Activated T-helper 2 cell treated with anti-CD3 and anti-CD28 coated beads, Interferon-gamma antibody, Interleukin-2, Interleukin-4, amounts not matched to agents 10 μg/mL and 5 μg/mL and 100 μg/mL, durations not matched to agents 14 hours and 24 hours and 36 hours (primary cell): ENCODE measurements at regions of chr3 and their contacts with region 1.

Region 1: DNA sequence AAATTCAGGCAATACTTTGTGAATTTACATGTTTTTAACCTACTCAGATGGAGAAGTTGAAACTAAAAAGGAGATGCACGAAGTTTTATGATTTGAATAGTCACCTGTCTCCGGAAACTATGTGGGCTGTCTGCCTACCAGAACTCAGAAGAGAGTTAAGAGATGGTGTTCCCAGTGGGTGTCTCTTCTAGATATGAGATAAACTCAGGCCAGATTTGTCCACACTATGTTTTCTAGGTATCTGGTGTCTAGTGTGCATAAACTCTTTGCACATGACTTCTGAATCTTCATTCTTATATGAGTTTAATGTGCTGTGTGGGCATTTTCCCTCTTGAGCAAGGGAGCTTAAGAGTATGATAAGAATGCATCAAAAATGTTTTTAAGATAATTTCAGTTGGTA is 222.8 kb downstream of the FOXP1 start:
- DNase-seq: no peak
- H3K4me3 Mint-ChIP-seq: peak overlapping the region; percentile 52
- H3K27ac Mint-ChIP-seq: peak overlapping the region; percentile 96
- H3K4me1 Mint-ChIP-seq: peaks cover 79% of the 10 kb centered on the region
- H3K27me3 Mint-ChIP-seq: no peaks in the 10 kb centered on the region

Region 2: GRCh38 chr3:71226565-71227269 is 134.0 kb before region 1 on chr3:
- intact Hi-C with region 1: loop called (anchors 1 kb)
- DNase-seq: peak; percentile 86
- H3K4me3 Mint-ChIP-seq: peak overlapping the region; percentile 88
- H3K27ac Mint-ChIP-seq: peak overlapping the region; percentile 97
- H3K4me1 Mint-ChIP-seq: peaks cover 63% of the 10 kb centered on the region
- H3K27me3 Mint-ChIP-seq: peaks cover 1% of the 10 kb centered on the region

Region 3: DNA sequence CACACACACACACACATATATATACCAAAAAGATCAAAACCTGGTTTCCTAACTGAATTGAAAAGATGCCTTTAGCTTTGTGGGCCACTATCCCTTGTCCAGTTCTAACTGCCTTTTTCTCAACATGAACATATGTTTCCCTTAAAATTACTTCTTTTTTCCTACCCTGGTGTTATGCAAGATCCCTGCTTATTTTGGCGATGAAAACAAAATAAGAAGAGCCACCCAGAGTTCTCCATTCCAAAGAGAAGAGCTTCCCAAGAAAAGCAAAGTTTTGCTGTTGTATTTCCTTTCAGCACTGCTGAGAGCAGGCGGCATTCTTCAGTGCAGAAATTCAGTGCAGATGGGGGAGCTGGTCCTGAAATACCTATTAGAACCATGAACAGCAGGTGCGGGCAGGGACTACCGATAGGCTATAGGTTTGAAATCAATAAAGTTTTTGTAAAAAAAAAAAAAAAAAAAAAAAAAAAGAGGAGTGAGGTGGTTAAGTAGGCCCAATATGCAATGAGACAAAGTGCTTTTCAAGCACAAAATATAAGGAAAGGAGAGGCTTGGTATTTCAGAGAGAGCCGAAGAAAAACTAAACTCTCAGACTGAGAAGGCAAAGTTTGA is 15.2 kb before region 1 on chr3:
- intact Hi-C with region 1: no loop called
- DNase-seq: no peak
- H3K4me3 Mint-ChIP-seq: no peak overlapping the region
- H3K27ac Mint-ChIP-seq: no peak overlapping the region
- H3K4me1 Mint-ChIP-seq: peaks cover 19% of the 10 kb centered on the region
- H3K27me3 Mint-ChIP-seq: no peaks in the 10 kb centered on the region

Region 4: DNA sequence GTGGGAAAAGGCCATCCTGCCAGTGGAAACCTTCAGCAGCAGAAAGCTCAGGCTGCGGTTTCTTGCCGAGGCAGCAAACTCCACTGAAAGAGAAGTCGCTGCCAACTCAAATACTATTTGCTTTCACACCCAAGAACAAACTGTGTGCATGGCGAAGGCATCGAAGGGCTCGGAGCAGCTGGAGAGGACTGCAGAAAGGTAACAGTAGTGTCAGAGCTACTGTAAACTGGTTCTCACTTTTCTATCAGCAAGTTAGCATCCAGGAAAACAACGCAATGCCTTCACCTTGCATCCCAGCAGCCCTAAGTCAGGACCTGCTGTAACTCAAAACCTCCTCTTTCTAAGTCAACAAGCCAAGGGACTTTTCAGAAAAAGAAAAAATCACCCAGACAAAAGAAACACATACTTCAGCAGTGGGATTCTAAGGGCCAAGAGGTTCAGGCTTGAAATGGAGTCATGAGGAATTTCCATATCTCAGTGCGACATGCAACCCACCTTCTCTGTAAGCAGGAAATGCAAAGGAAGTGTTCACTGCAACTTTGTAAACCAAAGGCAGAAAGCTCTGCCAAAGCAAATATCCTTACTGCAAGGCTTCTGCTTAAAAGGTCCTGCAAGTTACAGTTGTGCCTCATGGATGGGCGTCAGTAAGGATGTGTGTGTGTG is 29.3 kb after region 1 on chr3:
- intact Hi-C with region 1: loop called (anchors 1 kb)
- DNase-seq: peak; percentile 20
- H3K4me3 Mint-ChIP-seq: peak overlapping the region; percentile 62
- H3K27ac Mint-ChIP-seq: peak overlapping the region; percentile 81
- H3K4me1 Mint-ChIP-seq: peaks cover 55% of the 10 kb centered on the region
- H3K27me3 Mint-ChIP-seq: no peaks in the 10 kb centered on the region

Region 5: DNA sequence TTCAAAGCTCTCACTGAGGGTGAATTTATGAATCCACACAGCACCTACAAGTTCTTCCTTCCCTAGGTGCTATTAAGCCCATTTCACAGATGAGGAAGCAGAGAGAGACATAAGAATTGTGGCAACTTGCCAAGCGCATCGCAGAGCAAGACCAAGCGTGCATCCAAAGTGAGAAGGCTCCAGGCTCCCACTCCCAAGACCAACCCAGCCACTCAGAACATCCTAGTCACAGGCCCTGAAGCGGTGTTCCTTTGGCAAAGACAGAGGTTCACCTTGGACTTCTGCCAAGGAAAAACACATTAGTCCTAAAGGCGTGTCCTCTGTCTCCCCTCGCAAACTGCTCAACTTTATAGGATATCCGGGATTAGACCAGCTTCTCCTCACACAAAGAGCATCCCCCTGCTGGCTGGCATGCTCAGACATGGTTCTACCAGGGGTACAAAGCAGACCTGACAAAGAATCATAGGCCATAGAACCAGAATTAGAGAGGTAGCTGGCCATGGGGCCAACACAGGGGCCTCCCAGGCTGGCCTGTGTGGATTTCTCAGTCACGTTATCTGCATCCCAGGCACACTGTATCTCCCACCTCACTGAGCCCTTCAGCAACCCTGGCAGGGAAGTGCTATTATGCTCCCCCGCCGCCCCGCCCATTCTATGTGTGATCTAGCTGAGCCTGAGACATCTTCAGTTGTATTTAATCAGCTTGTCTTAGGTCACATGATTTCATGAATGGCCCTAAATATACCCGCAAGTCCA is 62.6 kb after region 1 on chr3:
- intact Hi-C with region 1: loop called (anchors 1 kb)
- DNase-seq: no peak
- H3K4me3 Mint-ChIP-seq: no peak overlapping the region
- H3K27ac Mint-ChIP-seq: peak overlapping the region; percentile 83
- H3K4me1 Mint-ChIP-seq: peaks cover 61% of the 10 kb centered on the region
- H3K27me3 Mint-ChIP-seq: no peaks in the 10 kb centered on the region

Region 6: DNA sequence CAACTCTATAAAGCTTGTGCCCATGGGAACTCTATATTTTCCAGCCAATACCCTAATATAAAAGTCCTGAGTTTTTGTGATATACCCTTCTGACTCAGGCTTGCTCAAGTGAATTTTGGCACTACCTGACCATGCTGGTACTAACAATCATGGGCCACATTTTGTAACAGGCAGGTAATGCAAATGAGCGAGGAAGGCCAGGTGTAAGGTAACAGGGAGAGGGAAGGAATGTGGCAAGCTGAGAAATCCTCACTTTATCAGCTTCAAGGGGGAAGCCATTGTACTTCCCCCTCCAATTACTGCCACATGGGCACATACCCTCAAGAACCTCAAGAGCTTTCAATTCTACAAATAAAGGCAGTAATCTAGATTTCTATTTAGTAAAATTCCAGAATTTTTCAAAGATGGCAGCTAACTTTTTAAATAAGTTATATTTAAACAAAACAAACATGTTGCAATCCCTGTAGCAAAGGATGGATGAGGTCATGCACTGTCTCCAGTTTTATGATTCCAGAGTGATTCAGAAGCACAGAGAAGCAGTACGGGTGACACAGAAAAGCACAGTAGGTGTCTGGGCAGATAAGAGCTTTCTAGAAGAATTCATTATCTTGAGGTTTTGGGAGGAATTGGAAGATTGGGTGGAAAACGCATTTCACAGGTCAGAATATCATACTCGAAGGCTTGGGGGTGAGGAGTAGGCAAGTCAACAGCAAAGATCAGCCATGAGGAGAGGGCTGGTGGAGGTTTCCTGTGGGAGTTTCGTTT is 135.1 kb after region 1 on chr3:
- intact Hi-C with region 1: loop called (anchors 1 kb)
- DNase-seq: no peak
- H3K4me3 Mint-ChIP-seq: peak overlapping the region; percentile 66
- H3K27ac Mint-ChIP-seq: peak overlapping the region; percentile 92
- H3K4me1 Mint-ChIP-seq: peaks cover 68% of the 10 kb centered on the region
- H3K27me3 Mint-ChIP-seq: no peaks in the 10 kb centered on the region